Heart left ventricle (tissue), 16 donors: ENCODE measurements at regions of chr15 and their contacts with region 1.

Region 1: DNA sequence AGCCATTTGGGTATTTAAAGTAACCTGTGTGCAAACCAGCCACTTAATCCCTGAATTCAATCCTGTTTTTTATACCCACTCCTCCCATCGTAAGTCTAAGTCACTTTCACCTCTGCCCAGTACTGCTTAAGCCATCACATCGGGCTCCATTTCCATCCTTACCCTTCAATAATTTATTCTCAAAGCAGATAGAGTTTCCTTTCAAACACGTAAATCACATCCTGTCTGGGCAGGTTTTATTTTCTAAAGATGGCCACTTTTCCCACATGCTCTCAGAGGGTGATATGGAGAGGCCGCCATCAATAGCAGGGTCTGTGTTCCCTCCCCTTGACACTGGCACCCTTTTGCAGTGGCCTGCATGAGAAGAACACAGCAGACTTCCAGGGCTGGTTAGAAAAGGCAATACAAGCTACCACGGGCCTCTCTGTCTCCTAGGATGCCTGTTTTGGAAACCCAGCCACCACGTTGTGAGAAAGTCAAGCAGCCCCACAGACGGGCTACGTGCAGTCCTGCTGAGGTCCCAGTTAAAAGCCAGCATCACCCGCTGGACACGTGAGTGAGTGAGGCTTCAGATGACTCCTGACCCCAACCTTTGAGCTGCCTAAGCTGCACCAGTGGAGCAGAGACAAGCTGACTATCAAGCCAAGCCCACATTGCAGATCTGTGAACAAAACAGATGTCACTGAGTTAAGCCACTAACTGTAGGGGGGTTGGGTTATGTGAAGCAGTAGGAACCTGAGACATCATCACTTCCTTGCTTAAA is 241.8 kb upstream of the SLCO3A1 start:
- DNase-seq: no peak
- ATAC-seq: no peak
- H3K4me3 ChIP-seq: no peak overlapping the region
- H3K27ac ChIP-seq: no peak overlapping the region
- H3K4me1 ChIP-seq: no peaks in the 10 kb centered on the region
- H3K27me3 ChIP-seq: no peaks in the 10 kb centered on the region
- CTCF ChIP-seq: no peak
- POLR2A ChIP-seq: no peak

Region 2: GRCh38 chr15:91491101-91491950 is 120.4 kb before region 1 on chr15:
- intact Hi-C with region 1: no loop called
- DNase-seq: no peak
- ATAC-seq: no peak
- H3K4me3 ChIP-seq: no peak overlapping the region
- H3K27ac ChIP-seq: no peak overlapping the region
- H3K4me1 ChIP-seq: no peaks in the 10 kb centered on the region
- H3K27me3 ChIP-seq: no peaks in the 10 kb centered on the region
- CTCF ChIP-seq: no peak
- POLR2A ChIP-seq: no peak

Region 3: GRCh38 chr15:91561371-91562100 is 50.2 kb before region 1 on chr15:
- intact Hi-C with region 1: loop called in 1 of 10 experiments (anchors 2 kb)
- DNase-seq: peak in 3 of 5 donors; percentile 38 to 47 (median 46)
- ATAC-seq: peak; percentile 61 to 93 (median 84)
- H3K4me3 ChIP-seq: no peak overlapping the region
- H3K27ac ChIP-seq: peak overlapping the region in 10 of 12 donors; percentile 27 to 84 (median 64)
- H3K4me1 ChIP-seq: peaks cover 0 to 22% (median 2%) of the 10 kb centered on the region in 12 donors
- H3K27me3 ChIP-seq: peaks cover 0 to 2% (median 0%) of the 10 kb centered on the region in 9 donors
- CTCF ChIP-seq: no peak
- POLR2A ChIP-seq: no peak